ENCODE measurements at regions of chr2 and their contacts with region 1.

Region 1: GRCh38 chr2:30336978-30337841 is 105.9 kb downstream of the LBH start:
- DNase-seq: peak; percentile 59
- H3K4me3 Mint-ChIP-seq: peak overlapping the region; percentile 41
- H3K27ac Mint-ChIP-seq: peak overlapping the region; percentile 93
- H3K4me1 Mint-ChIP-seq: peaks cover 83% of the 10 kb centered on the region
- H3K27me3 Mint-ChIP-seq: no peaks in the 10 kb centered on the region

Region 2: GRCh38 chr2:30146438-30147147 is 190.6 kb before region 1 on chr2 and contains the start of gene YPEL5:
- intact Hi-C with region 1: loop called (anchors 5 kb)
- DNase-seq: peak; percentile 99
- H3K4me3 Mint-ChIP-seq: peak within 1 kb of the TSS; percentile 77
- H3K27ac Mint-ChIP-seq: peak within 1 kb of the TSS; percentile 92
- H3K4me1 Mint-ChIP-seq: peaks cover 34% of the 10 kb centered on the region
- H3K27me3 Mint-ChIP-seq: no peaks in the 10 kb centered on the region
- total RNA-seq, gene YPEL5: 24.1 and 27.8 TPM in 2 replicates

Region 3: GRCh38 chr2:30225131-30225762 is 112.0 kb before region 1 on chr2:
- intact Hi-C with region 1: loop called (anchors 1 kb)
- DNase-seq: peak; percentile 48
- H3K4me3 Mint-ChIP-seq: peak overlapping the region; percentile 81
- H3K27ac Mint-ChIP-seq: peak overlapping the region; percentile 96
- H3K4me1 Mint-ChIP-seq: peaks cover 46% of the 10 kb centered on the region
- H3K27me3 Mint-ChIP-seq: peaks cover 2% of the 10 kb centered on the region

Region 4: DNA sequence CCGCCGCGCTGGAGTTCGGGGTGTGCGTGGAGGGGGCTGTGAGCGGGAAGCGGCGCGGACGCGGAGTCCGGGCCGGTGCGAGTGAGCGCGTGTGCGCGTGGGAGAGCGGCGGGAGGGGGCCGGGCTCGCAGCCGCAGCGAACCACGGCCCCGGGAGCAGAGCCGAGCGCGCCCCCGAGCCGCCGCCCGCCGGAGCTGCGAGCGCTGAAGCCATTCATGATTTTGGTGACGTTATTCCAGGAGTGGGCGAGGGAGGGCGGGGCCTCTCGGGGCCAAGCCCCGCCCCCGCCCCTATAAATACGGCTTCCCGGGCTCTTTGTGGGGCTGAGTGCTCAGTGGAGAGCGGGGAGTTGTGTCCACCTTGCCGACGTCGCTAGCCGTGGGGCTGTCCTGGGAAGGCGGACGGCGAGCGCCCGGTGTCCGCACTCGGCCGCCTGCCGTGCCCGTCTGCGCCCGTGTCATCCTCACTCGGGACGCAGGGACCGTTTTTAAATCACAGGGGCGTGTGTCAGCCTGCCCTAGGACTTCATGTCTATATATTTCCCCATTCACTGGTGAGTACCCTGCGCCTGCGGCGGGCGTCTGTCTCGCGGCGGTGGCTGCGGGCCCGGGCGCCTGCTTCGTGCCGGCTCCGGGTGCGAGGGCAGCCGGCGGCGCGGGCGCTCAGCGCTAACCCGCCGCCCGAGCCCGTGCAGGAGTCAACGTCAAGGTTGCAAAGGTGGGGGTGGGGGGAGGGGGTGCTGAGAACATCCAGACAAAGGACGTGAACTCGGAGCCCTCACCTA is 105.8 kb before region 1 on chr2 and contains the start of gene LBH:
- intact Hi-C with region 1: loop called (anchors 1 kb)
- DNase-seq: peak; percentile 70
- H3K4me3 Mint-ChIP-seq: peak within 1 kb of the TSS; percentile 84
- H3K27ac Mint-ChIP-seq: peak within 1 kb of the TSS; percentile 79
- H3K4me1 Mint-ChIP-seq: peaks cover 50% of the 10 kb centered on the region
- H3K27me3 Mint-ChIP-seq: peaks cover 4% of the 10 kb centered on the region
- total RNA-seq, gene LBH: 60.8 and 61.1 TPM in 2 replicates

Region 5: GRCh38 chr2:30252723-30253701 is 84.2 kb before region 1 on chr2:
- intact Hi-C with region 1: no loop called
- DNase-seq: peak; percentile 51
- H3K4me3 Mint-ChIP-seq: no peak overlapping the region
- H3K27ac Mint-ChIP-seq: peak overlapping the region; percentile 86
- H3K4me1 Mint-ChIP-seq: peaks cover 59% of the 10 kb centered on the region
- H3K27me3 Mint-ChIP-seq: no peaks in the 10 kb centered on the region

Region 6: DNA sequence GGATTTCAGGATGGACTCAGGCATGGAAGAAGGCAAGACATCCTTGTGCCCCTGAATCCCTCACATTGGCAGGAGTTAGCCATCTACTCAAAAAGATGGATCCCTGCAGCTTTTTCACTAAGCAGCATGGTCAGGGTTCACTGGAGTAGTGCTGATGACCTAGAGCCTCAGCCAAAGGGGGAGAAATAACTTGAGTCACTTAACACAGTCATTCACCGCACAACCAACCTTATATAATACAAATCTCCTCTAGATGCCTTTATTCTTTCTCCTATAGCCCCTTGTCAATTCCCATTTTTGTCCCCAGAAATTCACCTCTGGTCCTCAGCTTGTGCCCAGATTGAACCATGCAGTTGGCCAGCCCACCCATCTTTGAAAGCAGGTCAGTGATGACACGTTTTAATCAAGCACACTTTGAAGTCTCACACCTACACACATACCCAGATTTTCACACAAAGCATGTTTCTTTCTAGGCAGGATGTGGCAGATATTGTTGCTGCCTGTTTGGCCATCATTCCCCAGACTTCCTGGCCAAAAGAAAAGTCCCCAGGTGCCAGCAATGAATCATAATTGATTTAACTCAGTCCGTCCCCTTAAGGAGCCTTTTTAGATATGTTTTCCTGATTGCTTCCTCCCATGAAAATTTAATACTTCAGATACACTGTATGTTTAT is 21.7 kb before region 1 on chr2:
- intact Hi-C with region 1: loop called (anchors 2 kb)
- DNase-seq: no peak
- H3K4me3 Mint-ChIP-seq: no peak overlapping the region
- H3K27ac Mint-ChIP-seq: peak overlapping the region; percentile 82
- H3K4me1 Mint-ChIP-seq: peaks cover 26% of the 10 kb centered on the region
- H3K27me3 Mint-ChIP-seq: no peaks in the 10 kb centered on the region

Region 7: GRCh38 chr2:30447149-30448045 is 110.2 kb after region 1 on chr2 and contains the start of gene LCLAT1:
- intact Hi-C with region 1: loop called (anchors 1 kb)
- DNase-seq: peak; percentile 81
- H3K4me3 Mint-ChIP-seq: peak within 1 kb of the TSS; percentile 94
- H3K27ac Mint-ChIP-seq: peak within 1 kb of the TSS; percentile 97
- H3K4me1 Mint-ChIP-seq: peaks cover 21% of the 10 kb centered on the region
- H3K27me3 Mint-ChIP-seq: no peaks in the 10 kb centered on the region
- total RNA-seq, gene LCLAT1: 24.6 and 28.9 TPM in 2 replicates

Region 8: GRCh38 chr2:30481323-30481800 is 144.2 kb after region 1 on chr2:
- intact Hi-C with region 1: no loop called
- DNase-seq: no peak
- H3K4me3 Mint-ChIP-seq: no peak overlapping the region
- H3K27ac Mint-ChIP-seq: no peak overlapping the region
- H3K4me1 Mint-ChIP-seq: peaks cover 7% of the 10 kb centered on the region
- H3K27me3 Mint-ChIP-seq: no peaks in the 10 kb centered on the region